Mucosa of descending colon (tissue), 3 donors: ENCODE measurements at regions of chr14 and their contacts with region 1.

Region 1: GRCh38 chr14:66070509-66071319 is 415.5 kb upstream of the CCDC196 start:
- DNase-seq: peak in 2 of 3 donors; percentile 53 to 76
- ATAC-seq: peak; percentile 72
- H3K4me3 ChIP-seq: no peak overlapping the region
- H3K4me1 ChIP-seq: no peaks in the 10 kb centered on the region
- CTCF ChIP-seq: peak; percentile 66

Region 2: GRCh38 chr14:65958664-65959562 is 111.8 kb before region 1 on chr14:
- intact Hi-C with region 1: loop called in 1 of 2 experiments (anchors 5 kb)
- DNase-seq: peak in 2 of 3 donors; percentile 29 to 37
- ATAC-seq: peak; percentile 76
- H3K4me3 ChIP-seq: no peak overlapping the region
- H3K4me1 ChIP-seq: peaks cover 16% of the 10 kb centered on the region
- CTCF ChIP-seq: peak; percentile 27